ENCODE measurements at regions of chr4 and their contacts with region 1.

Region 1: DNA sequence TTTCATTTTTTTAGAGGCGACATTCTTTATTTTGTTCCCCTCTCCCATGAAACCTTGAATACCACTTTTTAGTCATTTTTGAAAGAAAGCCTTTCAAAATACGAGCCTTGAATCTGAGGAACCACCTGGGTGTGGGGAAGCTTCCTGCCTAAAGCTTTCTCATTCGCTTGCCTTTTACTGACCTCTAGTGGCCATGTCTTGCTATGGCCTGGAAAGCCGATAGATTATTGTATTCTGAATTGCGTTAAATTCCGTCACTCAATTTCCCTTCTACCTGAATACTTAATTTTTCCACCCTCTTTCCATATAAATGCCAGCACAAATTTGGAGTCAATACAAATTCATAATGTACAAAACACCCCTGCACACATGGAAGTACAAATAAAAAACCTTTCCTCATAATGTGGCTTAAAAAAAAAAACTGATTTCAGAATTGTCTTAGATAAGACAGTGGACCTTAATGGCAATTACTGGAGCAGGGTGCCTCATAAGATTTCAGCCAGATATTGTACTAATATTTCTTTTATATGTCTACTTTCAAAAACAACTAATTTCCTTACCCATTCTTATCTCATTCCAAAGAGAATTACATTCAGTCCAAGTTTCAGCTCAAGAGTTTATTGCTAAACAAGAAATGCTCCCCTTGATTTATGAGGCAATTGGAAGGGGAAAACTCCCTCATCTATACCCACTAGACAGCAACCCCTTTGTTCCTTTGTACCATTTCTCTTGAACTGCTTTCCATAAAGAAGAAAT is 217.9 kb downstream of the CENPC start:
- DNase-seq: no peak
- H3K4me3 ChIP-seq: no peak overlapping the region
- H3K27ac ChIP-seq: no peak overlapping the region
- H3K4me1 ChIP-seq: peaks cover 0 to 5% (median 2%) of the 10 kb centered on the region in 6 donors
- H3K27me3 ChIP-seq: peaks cover 0 to 33% (median 0%) of the 10 kb centered on the region in 7 donors
- CTCF ChIP-seq: peak; percentile 40 to 84 (median 74)
- POLR2A ChIP-seq: no peak

Region 2: DNA sequence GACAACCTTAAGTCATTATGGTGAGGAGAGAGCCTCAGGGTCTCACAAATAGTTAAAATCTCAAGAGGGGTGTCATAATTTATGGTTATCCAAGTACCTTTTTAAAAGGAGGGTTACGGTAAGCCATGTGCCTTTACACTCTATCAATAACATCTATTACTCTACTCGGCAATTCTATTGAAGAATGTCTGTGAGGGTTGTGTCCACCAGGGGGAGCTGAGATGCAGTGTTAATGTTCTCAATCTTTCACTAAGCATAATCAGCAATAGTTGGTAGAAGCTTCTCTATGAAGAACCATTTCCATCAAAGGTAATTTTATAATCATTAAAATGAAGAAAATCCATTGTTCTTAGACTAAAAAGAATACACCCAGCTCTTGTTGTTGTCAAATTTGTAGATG is 239.5 kb before region 1 on chr4:
- intact Hi-C with region 1: loop called (anchors 10 kb)
- DNase-seq: no peak
- H3K4me3 ChIP-seq: no peak overlapping the region
- H3K27ac ChIP-seq: no peak overlapping the region
- H3K4me1 ChIP-seq: no peaks in the 10 kb centered on the region
- H3K27me3 ChIP-seq: no peaks in the 10 kb centered on the region
- CTCF ChIP-seq: peak in 6 of 11 experiments; percentile 29 to 55 (median 46)
- POLR2A ChIP-seq: no peak

Measured in spleen (tissue), 13 donors.